ENCODE measurements at regions of chr1 and their contacts with region 1.

Region 1: GRCh38 chr1:40299366-40300248 is 17.5 kb downstream of the COL9A2 start:
- DNase-seq: no peak
- H3K4me3 ChIP-seq: no peak overlapping the region
- H3K27ac ChIP-seq: no peak overlapping the region
- H3K4me1 ChIP-seq: no peaks in the 10 kb centered on the region
- H3K27me3 ChIP-seq: no peaks in the 10 kb centered on the region
- CTCF ChIP-seq: no peak

Region 2: GRCh38 chr1:40373338-40374283 is 74.0 kb after region 1 on chr1 and contains the start of gene SMAP2:
- CTCF ChIA-PET with region 1: no interaction called
- dilution Hi-C with region 1: loop called (anchors 10 kb)
- in situ Hi-C with region 1: no loop called
- intact Hi-C with region 1: no loop called
- DNase-seq: peak; percentile 95
- H3K4me3 ChIP-seq: peak within 1 kb of the TSS; percentile 65 to 80 (median 71)
- H3K27ac ChIP-seq: peak within 1 kb of the TSS; percentile 65
- H3K4me1 ChIP-seq: peaks cover 12% of the 10 kb centered on the region
- H3K27me3 ChIP-seq: no peaks in the 10 kb centered on the region
- CTCF ChIP-seq: no peak
- total RNA-seq, gene SMAP2: 17.5 to 20.5 TPM

Measured in mammary epithelial cell (primary cell).